WTC11 (cell line): ENCODE measurements at regions of chr7 and their contacts with region 1.

Region 1: GRCh38 chr7:150435390-150436073 is 14.9 kb upstream of the GIMAP8 start:
- DNase-seq: no peak
- ATAC-seq: no peak
- H3K4me3 Mint-ChIP-seq: no peak overlapping the region
- H3K27ac Mint-ChIP-seq: no peak overlapping the region
- H3K4me1 Mint-ChIP-seq: no peaks in the 10 kb centered on the region
- H3K27me3 Mint-ChIP-seq: peaks cover 10% of the 10 kb centered on the region
- CTCF ChIP-seq: no peak

Region 2: DNA sequence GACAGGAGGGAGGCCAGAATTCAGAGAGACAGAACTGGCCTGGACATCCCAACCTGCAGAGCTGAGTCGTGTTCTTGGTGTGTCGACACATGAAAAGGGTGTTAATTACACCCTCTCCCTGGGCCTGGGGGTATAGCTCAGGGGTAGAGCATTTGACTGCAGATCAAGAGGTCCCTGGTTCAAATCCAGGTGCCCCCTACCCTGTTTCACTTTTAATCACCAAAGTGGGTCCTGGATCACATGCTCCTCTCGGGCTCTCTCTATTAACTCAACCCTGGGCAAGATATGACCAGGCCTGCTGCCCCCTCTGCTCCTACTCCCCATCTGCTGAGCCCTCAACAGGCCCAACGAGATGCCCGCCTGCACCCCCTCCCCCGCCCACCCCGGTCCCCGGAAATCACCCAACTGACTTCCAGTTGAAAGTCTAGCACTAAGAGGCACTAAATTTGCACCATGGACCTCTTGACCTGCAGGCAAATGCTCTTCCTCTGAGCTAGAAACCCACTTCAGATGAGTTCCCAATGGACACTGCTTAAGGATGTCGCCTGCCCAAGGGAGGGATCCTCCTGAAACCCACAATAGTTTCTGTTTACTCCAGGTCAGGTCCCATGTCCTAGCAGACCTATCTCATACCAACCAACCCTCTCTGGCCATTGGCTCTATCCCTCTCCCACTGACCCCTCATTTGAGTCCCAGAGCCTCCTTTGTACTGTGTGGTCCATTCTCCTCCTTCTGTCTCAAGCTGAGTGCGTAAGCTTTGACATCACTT is 799.8 kb before region 1 on chr7:
- CTCF ChIA-PET with region 1: no interaction called
- POLR2A ChIA-PET with region 1: no interaction called
- DNase-seq: peak; percentile 76
- ATAC-seq: peak; percentile 97
- H3K4me3 Mint-ChIP-seq: peak overlapping the region; percentile 15; the same call in 1 of the 2 replicates
- H3K27ac Mint-ChIP-seq: 0 out of 2 replicates have a peak overlapping the region, but pooled peaks have one; percentile 50
- H3K4me1 Mint-ChIP-seq: peaks cover 4% of the 10 kb centered on the region; the same call in 1 of the 2 replicates
- H3K27me3 Mint-ChIP-seq: peaks cover 18% of the 10 kb centered on the region
- CTCF ChIP-seq: no peak

Region 3: DNA sequence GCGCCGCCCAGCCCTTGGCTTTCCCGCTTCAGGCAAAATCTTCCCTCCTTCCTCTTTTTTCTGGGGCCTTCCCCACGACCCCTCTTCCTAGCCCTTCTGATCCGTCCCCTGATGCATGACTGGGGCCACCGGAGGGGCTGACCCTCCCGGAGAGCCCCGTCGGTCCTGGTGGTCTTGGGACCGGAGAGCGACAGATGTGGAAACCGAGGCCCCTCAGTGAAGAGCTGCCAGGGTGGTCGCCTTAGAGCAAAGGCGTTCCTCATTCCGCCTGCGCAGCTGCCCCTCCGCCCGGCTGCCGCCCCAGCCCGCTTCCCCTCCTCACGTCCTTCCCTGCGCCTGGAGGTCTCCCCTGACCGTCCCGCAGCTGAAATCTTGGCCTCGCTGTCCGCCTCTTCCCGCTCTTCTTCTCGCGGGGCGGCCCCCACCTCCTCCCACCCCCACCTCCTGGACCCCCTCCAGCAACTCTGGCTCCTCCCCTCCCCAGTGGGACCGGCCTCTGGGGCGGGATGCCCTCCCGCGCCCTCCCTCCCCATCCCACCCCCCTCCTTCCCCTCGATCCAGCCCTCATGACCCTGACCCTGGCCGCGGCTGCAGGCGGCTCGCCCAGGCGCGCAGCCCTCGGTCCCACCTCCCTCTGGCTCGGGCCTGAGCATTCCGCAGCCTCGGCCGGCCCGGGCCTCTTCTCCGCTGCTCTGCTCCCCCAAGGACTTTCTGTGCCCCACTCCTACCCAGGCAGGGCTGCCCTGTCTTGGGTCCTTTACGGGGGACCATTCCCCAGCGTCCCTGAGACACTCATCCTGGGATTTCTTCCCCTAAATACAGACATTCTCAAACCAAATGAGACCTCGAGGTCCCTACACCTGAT is 94.0 kb before region 1 on chr7 and contains the start of gene RARRES2:
- CTCF ChIA-PET with region 1: no interaction called
- POLR2A ChIA-PET with region 1: no interaction called
- DNase-seq: peak; percentile 73
- ATAC-seq: peak; percentile 69
- H3K4me3 Mint-ChIP-seq: peak within 1 kb of the TSS; percentile 87
- H3K27ac Mint-ChIP-seq: no peak within 1 kb of the TSS
- H3K4me1 Mint-ChIP-seq: peaks cover 48% of the 10 kb centered on the region
- H3K27me3 Mint-ChIP-seq: peaks cover 34% of the 10 kb centered on the region
- CTCF ChIP-seq: no peak
- total RNA-seq, gene RARRES2: 193 to 230 TPM (median 197 TPM) in 3 replicates

Region 4: GRCh38 chr7:150448789-150449147 is 13.2 kb after region 1 on chr7:
- CTCF ChIA-PET with region 1: interaction called, 15 read pairs
- POLR2A ChIA-PET with region 1: no interaction called
- DNase-seq: peak; percentile 84
- ATAC-seq: peak; percentile 85
- H3K4me3 Mint-ChIP-seq: no peak overlapping the region
- H3K27ac Mint-ChIP-seq: no peak overlapping the region
- H3K4me1 Mint-ChIP-seq: peaks cover 13% of the 10 kb centered on the region
- H3K27me3 Mint-ChIP-seq: peaks cover 41% of the 10 kb centered on the region
- CTCF ChIP-seq: peak; percentile 79